Right ventricle myocardium inferior (tissue), 1 donor: ENCODE measurements at regions of chr9 and their contacts with region 1.

Region 1: GRCh38 chr9:84397151-84397728 is 56.7 kb upstream of the SLC28A3 start:
- DNase-seq: no peak
- ATAC-seq: peak; percentile 78

Region 2: GRCh38 chr9:84424931-84425330 is 27.7 kb after region 1 on chr9:
- intact Hi-C with region 1: no loop called
- DNase-seq: no peak
- ATAC-seq: no peak

Region 3: DNA sequence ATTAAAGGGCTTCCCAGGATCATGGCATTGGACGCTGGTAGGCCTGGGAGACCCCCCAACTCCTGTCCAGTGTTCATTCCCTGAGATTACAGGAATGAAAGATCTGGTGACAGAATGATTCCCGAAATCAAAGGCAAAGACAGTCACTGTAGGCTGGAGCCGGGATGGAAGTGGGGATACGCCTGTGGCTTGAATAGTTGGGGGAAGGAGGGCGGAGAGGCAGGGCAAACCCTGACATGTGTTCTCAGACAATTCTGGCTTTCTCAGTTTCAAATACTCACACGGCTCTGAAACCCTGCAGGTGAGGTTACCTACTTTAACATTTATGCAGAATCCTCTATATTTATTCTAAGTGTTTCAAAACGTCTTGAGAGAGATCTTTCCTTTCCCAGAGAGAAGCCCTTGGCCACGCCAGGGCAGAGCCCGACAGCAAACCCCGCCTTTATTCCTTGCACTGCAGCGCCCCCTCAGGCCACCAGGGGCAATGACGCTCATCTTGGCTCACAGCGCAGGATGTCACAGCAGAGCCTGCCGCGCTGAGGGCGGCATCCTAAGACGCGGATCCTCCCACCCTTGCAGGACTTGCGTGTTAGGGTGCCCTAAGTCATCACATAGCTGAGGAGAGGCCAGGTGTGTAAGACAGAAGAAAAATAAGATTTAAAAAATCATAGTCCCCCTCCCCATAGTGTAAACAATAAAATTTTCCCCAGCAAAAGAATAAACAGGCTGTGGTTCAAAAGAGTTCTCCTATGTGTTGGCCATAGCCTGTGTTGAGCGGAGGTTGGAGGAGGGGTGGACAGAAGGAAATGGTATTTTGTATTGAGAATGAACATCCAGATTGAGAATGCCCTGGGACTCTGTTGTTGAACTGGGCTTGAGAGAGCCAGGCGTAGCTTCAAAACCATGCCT is 556.8 kb after region 1 on chr9:
- intact Hi-C with region 1: loop called (anchors 5 kb)
- DNase-seq: peak; percentile 88
- ATAC-seq: peak; percentile 92

Region 4: GRCh38 chr9:85142968-85143367 is 745.7 kb after region 1 on chr9:
- intact Hi-C with region 1: loop called (anchors 5 kb)
- DNase-seq: no peak
- ATAC-seq: peak; percentile 50

Region 5: GRCh38 chr9:85258823-85259370 is 861.7 kb after region 1 on chr9:
- intact Hi-C with region 1: loop called (anchors 5 kb)
- DNase-seq: peak; percentile 67
- ATAC-seq: peak; percentile 70

Region 6: GRCh38 chr9:85610074-85610860 is 1213.0 kb after region 1 on chr9:
- intact Hi-C with region 1: loop called (anchors 5 kb)
- DNase-seq: no peak
- ATAC-seq: peak; percentile 69